ENCODE measurements at regions of chr10 and their contacts with region 1.

Region 1: DNA sequence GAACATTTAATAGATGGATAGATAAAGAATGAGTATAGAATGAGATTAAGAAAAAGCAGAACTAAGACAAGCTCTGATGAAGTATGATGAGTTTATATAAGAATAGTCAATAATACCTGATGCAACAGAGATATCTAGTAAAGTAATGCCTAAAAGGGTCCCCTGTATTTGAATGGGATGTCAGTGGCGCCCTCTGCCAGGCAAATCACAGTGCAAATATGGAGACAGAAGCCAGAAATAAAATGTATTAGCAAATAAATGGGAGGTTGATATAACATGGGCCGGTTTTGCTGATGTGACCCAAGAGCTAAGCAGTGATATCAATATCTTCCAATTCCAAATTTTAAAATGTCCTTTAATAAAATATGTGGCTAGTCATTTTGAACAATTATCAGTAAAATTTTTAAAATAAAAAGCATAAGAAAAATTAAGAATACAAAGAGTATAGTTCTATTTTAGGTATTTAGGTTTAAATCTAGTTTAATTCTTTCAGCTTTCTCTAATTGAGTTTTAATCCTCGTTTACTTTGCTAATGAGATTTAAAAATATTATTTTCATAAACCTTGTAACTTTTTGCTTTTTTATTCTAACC is 62.6 kb downstream of the ADK start:
- DNase-seq: peak; percentile 47
- H3K4me3 Mint-ChIP-seq: no peak overlapping the region
- H3K27ac Mint-ChIP-seq: no peak overlapping the region
- H3K4me1 Mint-ChIP-seq: peaks cover 2% of the 10 kb centered on the region
- H3K27me3 Mint-ChIP-seq: no peaks in the 10 kb centered on the region

Region 2: DNA sequence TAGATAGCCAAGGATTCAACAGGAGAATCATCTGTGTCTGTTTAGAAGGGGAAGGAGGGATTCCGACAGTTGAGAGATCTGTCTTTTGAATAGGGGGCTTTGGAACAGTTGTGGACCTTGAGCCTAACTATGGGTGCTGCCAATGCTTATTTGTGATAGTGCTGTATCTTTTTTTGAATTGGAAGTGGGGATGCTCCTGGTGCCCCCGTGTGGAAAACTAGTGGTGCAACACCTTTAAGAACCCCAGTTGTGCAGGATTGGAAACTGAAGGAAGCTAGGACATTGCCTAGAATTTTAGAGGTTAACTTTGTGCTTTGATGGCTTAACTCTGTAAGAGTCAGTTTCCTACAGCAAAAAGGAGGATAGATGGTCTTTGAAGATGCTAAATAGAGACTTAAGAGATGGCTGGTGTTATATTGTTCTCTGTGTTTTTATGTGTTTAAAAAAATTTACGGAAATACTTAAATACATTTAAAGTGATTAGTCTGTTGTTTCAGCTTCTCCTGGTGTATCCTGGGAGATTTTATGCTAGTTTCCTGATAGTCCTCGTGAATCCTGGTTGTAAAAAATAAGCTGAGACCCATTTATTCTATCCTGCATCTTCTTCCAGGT is 132.4 kb before region 1 on chr10:
- CTCF ChIA-PET with region 1: no interaction called
- POLR2A ChIA-PET with region 1: no interaction called
- DNase-seq: peak; percentile 45
- H3K4me3 Mint-ChIP-seq: no peak overlapping the region
- H3K27ac Mint-ChIP-seq: no peak overlapping the region
- H3K4me1 Mint-ChIP-seq: peaks cover 57% of the 10 kb centered on the region
- H3K27me3 Mint-ChIP-seq: no peaks in the 10 kb centered on the region

Region 3: GRCh38 chr10:74151056-74151878 is 62.4 kb before region 1 on chr10 and contains the start of gene ADK:
- CTCF ChIA-PET with region 1: interaction called, 11 read pairs
- POLR2A ChIA-PET with region 1: no interaction called
- DNase-seq: peak; percentile 100
- H3K4me3 Mint-ChIP-seq: no peak within 1 kb of the TSS
- H3K27ac Mint-ChIP-seq: peak within 1 kb of the TSS; percentile 48
- H3K4me1 Mint-ChIP-seq: peaks cover 38% of the 10 kb centered on the region
- H3K27me3 Mint-ChIP-seq: no peaks in the 10 kb centered on the region
- total RNA-seq, gene ADK: 29.3 to 31.8 TPM

Region 4: GRCh38 chr10:74189999-74190421 is 23.7 kb before region 1 on chr10:
- CTCF ChIA-PET with region 1: interaction called, 19 read pairs
- POLR2A ChIA-PET with region 1: interaction called, 3 read pairs
- DNase-seq: peak; percentile 29
- H3K4me3 Mint-ChIP-seq: peak overlapping the region; percentile 38
- H3K27ac Mint-ChIP-seq: peak overlapping the region; percentile 84
- H3K4me1 Mint-ChIP-seq: peaks cover 45% of the 10 kb centered on the region
- H3K27me3 Mint-ChIP-seq: no peaks in the 10 kb centered on the region

Region 5: DNA sequence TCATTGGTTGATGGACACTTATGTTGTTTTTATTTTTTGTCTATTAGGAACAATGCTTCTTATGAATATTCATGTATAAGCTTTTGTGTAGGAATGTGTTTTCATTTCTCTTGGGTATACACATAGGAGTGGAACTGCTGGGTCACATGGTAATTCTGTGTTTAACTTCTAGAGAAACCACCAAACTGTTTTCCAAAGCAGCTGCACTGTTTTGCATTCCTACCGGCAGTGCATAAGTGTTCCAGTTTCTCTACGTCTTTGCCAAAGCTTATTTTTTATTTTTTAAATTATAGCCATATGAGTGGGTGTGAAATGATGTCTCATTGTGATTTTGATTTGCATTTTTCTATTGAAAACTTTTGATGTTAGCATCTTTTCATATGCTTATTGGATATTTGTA is 11.3 kb before region 1 on chr10:
- CTCF ChIA-PET with region 1: interaction called, 16 read pairs
- POLR2A ChIA-PET with region 1: no interaction called
- DNase-seq: no peak
- H3K4me3 Mint-ChIP-seq: no peak overlapping the region
- H3K27ac Mint-ChIP-seq: no peak overlapping the region
- H3K4me1 Mint-ChIP-seq: peaks cover 3% of the 10 kb centered on the region
- H3K27me3 Mint-ChIP-seq: no peaks in the 10 kb centered on the region